MCF 10A (cell line): ENCODE measurements at regions of chr4 and their contacts with region 1.

Region 1: GRCh38 chr4:93578942-93579341 is 249.6 kb upstream of the ATOH1 start:
- DNase-seq: no peak
- H3K4me3 Mint-ChIP-seq: no peak overlapping the region
- H3K27ac Mint-ChIP-seq: no peak overlapping the region
- H3K4me1 Mint-ChIP-seq: no peaks in the 10 kb centered on the region
- H3K27me3 Mint-ChIP-seq: no peaks in the 10 kb centered on the region
- CTCF ChIP-seq: no peak

Region 2: DNA sequence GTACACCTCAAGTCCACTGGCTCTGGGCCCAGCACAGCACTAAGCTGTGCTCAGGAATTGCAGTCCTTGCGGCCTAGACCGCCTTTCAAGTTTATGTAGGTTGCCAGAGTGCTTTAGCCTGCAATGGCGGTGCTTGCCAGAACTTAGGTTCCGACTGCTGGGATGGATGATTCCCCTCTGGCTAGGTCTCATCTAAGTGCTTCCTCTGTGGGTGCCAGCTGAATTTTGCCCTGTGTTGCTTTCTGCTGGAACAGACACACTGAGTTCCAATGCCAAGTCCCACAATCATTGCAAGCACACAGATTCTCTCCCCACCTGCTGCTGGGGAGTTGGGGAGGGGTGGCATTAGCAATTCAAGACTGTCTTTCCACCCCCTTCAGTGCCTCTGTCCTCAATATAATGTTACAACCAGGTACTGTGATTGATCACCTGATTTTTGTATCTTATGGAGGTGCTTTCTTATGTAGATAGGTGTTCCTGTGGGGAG is 1145.6 kb before region 1 on chr4:
- CTCF ChIA-PET with region 1: no interaction called
- POLR2A ChIA-PET with region 1: no interaction called
- intact Hi-C with region 1: no loop called
- DNase-seq: no peak
- H3K4me3 Mint-ChIP-seq: no peak overlapping the region
- H3K27ac Mint-ChIP-seq: no peak overlapping the region
- H3K4me1 Mint-ChIP-seq: peaks cover 5% of the 10 kb centered on the region
- H3K27me3 Mint-ChIP-seq: no peaks in the 10 kb centered on the region
- CTCF ChIP-seq: no peak

Region 3: DNA sequence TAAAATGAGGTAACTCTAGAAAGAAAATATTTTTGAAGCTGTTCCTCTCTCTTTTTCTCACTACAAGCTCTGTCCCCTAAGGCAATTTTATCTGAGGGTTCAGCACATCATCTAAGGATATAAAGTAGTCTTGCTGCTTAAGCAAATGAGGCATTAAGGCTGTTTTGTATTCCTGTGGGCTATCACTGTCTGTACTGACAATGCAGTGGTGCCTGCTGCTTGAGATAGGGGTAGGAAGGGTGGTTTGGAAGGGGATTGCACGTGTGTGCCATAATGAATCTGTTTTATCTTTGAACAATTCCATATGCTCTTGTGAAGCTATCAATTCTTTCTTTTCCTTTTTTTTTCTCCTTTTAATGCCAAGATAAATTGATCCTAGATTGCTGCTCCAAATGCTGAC is 121.6 kb after region 1 on chr4:
- CTCF ChIA-PET with region 1: no interaction called
- POLR2A ChIA-PET with region 1: no interaction called
- intact Hi-C with region 1: loop called (anchors 10 kb)
- DNase-seq: no peak
- H3K4me3 Mint-ChIP-seq: no peak overlapping the region
- H3K27ac Mint-ChIP-seq: no peak overlapping the region
- H3K4me1 Mint-ChIP-seq: no peaks in the 10 kb centered on the region
- H3K27me3 Mint-ChIP-seq: no peaks in the 10 kb centered on the region
- CTCF ChIP-seq: no peak